Endothelial cell of umbilical vein (primary cell): ENCODE measurements at regions of chr10 and their contacts with region 1.

Region 1: DNA sequence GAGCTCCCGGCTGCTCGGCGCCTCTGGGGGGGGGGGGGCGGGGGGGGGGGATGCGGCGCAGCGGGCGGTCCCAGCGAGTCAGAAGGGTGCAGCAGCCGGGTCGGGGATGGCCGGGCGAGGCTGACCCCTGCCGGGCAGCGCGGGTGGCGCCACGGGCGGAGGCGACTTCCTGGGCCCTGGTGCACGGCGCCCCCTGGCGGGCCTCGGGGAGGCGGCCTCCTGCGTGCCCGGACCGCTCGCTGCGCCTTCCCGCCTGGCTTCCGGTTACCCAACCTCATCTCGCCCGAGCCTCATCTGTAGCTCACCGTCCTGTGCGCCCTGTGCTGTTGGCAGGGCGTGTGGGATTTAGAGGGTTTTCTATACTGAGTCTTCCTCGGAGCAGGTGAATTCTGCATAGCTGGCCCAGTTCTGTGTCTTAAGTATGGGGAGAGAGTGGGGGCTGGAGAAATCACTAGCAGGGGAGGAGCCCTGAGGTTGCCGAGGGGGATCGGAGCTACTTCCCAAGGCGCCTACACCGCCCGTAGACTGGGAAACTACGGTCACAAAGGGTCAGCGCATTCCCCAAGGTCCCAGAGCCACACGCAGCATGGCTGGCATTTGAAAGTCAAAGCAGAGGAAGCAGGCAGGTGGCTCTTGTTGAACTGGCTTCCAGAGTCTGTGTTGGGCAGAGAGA is 28.3 kb upstream of the WDFY4 start:
- DNase-seq: peak; percentile 90
- H3K4me3 ChIP-seq: peak overlapping the region in 2 of 3 experiments; percentile 42 to 60
- H3K27ac ChIP-seq: peak overlapping the region; percentile 78
- H3K4me1 ChIP-seq: peaks cover 20% of the 10 kb centered on the region
- H3K27me3 ChIP-seq: peaks cover 0 to 4% of the 10 kb centered on the region in 2 experiments
- CTCF ChIP-seq: peak; percentile 94 to 99
- POLR2A ChIP-seq: no peak

Region 2: DNA sequence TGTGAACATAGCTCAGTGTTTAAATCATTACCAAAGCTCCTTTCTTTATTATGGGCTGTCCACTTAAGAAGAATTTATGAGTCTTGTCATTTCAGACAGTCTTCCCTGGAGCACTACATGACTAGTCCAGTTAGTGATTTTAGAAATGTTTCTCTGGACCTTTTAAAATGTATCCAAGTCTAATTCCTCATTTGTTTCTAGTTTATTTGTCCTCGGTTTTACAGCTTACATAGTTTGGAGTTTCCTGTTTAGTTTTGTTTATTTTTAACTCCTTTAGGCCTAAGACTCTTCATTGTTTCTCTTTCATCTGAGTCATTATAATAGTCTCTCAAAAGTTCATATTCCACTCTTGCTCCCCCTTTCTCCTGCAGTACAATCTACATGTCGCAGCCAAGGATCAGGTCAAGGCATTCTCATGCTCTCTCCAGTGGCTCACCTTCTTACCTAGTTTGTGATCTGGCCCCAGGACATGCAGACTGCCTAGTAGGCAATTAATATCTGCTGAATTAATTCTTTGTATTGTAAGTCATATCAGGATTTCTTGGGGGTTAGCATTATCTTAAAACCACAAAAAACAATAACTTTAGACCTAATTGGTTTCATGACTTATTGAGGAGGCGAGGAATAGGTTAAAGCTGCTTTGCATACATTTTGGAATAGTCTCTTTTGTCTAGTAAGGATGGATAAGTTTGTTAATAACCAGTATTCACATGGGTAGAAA is 256.1 kb before region 1 on chr10:
- CTCF ChIA-PET with region 1: interaction called, 13 read pairs
- POLR2A ChIA-PET with region 1: no interaction called
- dilution Hi-C with region 1: no loop called
- intact Hi-C with region 1: no loop called
- DNase-seq: peak; percentile 63
- H3K4me3 ChIP-seq: no peak overlapping the region
- H3K27ac ChIP-seq: peak overlapping the region; percentile 20
- H3K4me1 ChIP-seq: peaks cover 19% of the 10 kb centered on the region
- H3K27me3 ChIP-seq: no peaks in the 10 kb centered on the region
- CTCF ChIP-seq: no peak
- POLR2A ChIP-seq: no peak

Region 3: GRCh38 chr10:48523820-48524758 is 132.3 kb before region 1 on chr10:
- CTCF ChIA-PET with region 1: interaction called, 47 read pairs
- POLR2A ChIA-PET with region 1: no interaction called
- dilution Hi-C with region 1: no loop called
- intact Hi-C with region 1: loop called (anchors 1 kb)
- DNase-seq: no peak
- H3K4me3 ChIP-seq: peak overlapping the region in 2 of 3 experiments; percentile 30 to 54
- H3K27ac ChIP-seq: no peak overlapping the region
- H3K4me1 ChIP-seq: peaks cover 33% of the 10 kb centered on the region
- H3K27me3 ChIP-seq: no peaks in the 10 kb centered on the region
- CTCF ChIP-seq: peak; percentile 69 to 77
- POLR2A ChIP-seq: no peak

Region 4: DNA sequence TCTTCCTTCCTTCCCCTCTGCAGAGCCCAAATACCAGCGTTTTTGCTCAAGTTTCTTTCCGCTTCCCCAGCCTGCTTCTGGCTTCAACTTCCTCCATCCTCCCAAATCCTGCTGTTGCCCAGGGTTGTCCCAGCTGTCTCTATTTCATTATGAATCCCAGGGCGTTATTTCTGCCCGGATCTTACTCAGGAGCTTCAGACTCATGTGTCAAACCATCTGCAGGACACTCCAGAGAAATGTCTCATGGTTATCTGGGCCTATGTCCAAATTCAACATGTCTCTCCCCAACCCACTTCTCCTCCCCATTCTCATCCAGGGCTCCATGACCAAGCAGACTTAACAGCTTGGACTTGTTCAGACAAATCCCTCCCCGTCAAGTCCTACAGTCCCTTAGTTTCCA is 67.1 kb before region 1 on chr10:
- CTCF ChIA-PET with region 1: interaction called, 58 read pairs
- POLR2A ChIA-PET with region 1: no interaction called
- dilution Hi-C with region 1: no loop called
- intact Hi-C with region 1: no loop called
- DNase-seq: peak; percentile 53
- H3K4me3 ChIP-seq: no peak overlapping the region
- H3K27ac ChIP-seq: peak overlapping the region; percentile 10
- H3K4me1 ChIP-seq: peaks cover 16% of the 10 kb centered on the region
- H3K27me3 ChIP-seq: no peaks in the 10 kb centered on the region
- CTCF ChIP-seq: no peak
- POLR2A ChIP-seq: no peak

Region 5: DNA sequence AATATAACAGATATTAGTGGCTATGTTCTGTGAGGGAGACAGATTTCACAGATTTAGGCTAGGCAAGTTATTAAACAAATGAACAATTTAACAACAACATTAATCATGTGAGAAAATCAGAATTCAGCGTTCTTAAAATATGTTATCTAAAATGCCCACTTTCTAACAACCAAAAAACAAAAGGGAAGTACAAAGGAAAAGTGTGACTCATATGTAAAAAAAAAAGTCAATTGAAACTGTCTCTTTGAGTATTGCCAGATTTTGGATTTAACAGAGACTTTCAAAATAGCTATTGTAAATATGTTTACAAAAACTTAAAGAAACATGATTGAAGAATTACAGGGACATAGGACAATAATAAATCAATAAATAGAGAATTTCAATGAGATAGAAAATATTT is 16.7 kb before region 1 on chr10:
- CTCF ChIA-PET with region 1: interaction called, 19 read pairs
- POLR2A ChIA-PET with region 1: no interaction called
- dilution Hi-C with region 1: no loop called
- intact Hi-C with region 1: no loop called
- DNase-seq: no peak
- H3K4me3 ChIP-seq: no peak overlapping the region
- H3K27ac ChIP-seq: peak overlapping the region; percentile 10
- H3K4me1 ChIP-seq: peaks cover 13% of the 10 kb centered on the region
- H3K27me3 ChIP-seq: no peaks in the 10 kb centered on the region
- CTCF ChIP-seq: no peak
- POLR2A ChIP-seq: no peak

Region 6: DNA sequence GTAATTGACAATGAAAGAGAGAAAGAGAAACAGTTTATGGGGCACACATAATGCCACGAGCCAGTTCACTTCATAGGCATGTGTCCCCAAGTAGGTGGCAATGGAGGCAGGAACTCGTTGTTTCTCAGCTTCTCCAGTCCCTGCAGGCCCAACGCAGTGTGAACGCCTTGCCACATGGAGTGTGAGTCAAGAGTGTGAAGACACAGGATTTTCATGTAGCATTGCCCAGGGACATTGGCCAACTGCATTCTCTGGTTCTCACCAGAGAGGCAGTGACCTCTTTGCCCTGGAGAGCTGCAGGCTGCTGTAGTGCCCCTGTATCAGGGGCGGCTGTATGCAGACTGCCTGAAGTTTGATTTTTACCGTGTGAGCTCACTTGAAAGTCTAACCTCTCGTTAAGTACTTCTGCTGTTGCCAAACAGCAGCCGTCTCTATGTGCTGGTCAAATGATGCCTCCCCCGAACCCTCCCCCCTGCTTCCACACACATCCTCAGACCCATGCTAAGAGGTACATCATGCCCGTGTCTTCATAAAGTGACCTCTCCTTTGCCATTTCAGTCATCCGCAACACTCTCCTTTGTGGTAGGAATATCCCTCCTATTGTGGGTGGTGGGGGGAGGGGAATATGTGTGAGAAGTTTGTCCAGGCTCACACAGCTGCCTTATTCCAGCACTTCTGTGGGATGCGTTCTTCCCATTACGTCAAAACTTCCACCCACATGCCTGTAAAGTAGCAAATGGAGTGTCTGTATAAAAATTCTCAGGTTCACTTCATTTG is 270.6 kb after region 1 on chr10:
- CTCF ChIA-PET with region 1: no interaction called
- POLR2A ChIA-PET with region 1: no interaction called
- dilution Hi-C with region 1: no loop called
- intact Hi-C with region 1: no loop called
- DNase-seq: no peak
- H3K4me3 ChIP-seq: no peak overlapping the region
- H3K27ac ChIP-seq: no peak overlapping the region
- H3K4me1 ChIP-seq: no peaks in the 10 kb centered on the region
- H3K27me3 ChIP-seq: no peaks in the 10 kb centered on the region
- CTCF ChIP-seq: no peak
- POLR2A ChIP-seq: no peak

Region 7: DNA sequence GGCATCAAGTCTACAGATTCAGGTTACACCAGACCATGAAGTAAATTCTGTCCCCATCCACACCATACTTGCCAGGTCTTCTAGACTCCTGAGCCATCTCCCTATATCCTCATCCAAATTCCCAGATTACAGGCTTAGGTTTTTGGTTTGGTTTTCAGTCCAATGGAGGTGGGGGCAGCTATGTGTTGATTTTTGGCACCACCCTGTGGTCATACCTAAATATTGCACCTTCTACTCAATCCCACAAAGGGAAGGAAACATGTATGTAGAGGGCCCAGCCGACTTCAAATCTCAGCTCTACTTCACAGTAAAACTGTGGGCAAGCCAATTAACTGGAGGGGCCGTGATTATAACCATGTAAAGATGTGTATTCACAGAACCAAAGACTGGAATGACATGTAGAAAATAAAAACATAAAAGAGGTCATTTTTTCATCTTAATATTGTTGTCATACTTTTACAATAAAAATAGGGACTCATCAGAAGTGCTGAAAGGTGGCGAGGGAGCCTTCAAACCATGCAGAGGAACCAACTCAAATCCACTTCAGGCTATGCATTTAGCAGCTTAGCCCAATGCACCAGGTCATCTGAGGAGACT is 862.7 kb after region 1 on chr10:
- CTCF ChIA-PET with region 1: interaction called, 99 read pairs
- POLR2A ChIA-PET with region 1: no interaction called
- dilution Hi-C with region 1: no loop called
- intact Hi-C with region 1: no loop called
- DNase-seq: peak; percentile 62
- H3K4me3 ChIP-seq: no peak overlapping the region
- H3K27ac ChIP-seq: no peak overlapping the region
- H3K4me1 ChIP-seq: no peaks in the 10 kb centered on the region
- H3K27me3 ChIP-seq: no peaks in the 10 kb centered on the region
- CTCF ChIP-seq: peak; percentile 42 to 59
- POLR2A ChIP-seq: no peak